Posterior vena cava (tissue), 2 donors: ENCODE measurements at regions of chr17 and their contacts with region 1.

Region 1: DNA sequence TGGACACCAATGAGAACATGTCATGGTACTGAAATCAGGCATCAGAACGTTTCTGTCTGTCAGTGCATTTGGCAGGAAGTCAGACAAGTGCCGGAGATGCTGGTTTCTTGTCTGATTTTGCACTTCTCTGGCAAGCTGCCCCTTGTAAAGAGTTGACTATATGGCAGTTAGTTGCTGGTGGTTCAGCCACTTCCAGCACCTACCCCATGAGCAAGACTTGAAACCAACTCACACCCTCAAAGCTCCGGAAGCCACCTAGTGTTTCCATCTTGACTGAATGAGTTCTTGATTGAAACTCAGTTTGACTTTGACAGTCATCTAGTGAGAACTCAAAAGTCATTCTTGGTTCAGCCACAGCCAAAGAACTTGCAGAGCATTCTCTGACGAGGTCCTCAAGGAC is 225.1 kb downstream of the SPECC1 start:
- DNase-seq: no peak

Region 2: DNA sequence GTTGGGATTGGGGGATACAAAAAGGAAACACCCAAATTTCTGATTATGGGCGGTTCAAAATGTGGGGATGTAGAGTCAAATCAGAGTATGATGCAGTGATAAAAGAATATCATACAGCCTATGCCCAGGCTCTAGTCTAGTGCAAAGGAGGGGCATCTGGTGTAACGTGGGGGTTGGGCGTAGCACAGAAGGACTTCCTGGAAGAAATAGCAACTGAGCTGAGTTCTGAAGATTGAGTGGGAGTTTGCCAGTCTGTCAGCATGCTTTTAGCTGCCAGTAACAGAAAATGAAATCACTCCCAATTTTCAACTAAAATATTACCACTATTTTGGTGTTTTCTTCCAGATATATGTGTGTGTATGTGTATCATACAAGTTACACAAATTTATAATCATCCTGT is 28.2 kb before region 1 on chr17:
- intact Hi-C with region 1: no loop called
- DNase-seq: no peak

Region 3: DNA sequence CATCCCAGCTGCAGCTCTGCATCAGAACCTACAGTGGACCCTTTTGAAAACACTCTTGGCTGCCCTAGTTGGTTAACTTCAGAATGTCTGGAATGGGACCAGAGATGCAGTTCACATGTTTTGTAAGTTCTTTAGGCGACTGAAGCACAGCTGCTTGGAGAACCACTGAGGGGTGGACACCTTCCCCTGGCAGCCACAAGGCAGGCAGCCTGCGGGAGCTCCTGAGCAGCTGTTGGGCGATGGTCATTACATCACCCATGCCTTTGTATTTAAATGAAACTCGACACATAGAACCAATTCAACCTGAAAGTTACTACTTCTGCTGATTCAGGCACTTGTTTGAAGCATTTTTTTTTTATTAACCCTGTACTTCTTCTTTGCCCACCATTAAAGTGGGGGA is 81.5 kb after region 1 on chr17:
- intact Hi-C with region 1: loop called in 1 of 2 experiments (anchors 10 kb)
- DNase-seq: no peak